ENCODE measurements at regions of chr19 and their contacts with region 1.

Region 1: DNA sequence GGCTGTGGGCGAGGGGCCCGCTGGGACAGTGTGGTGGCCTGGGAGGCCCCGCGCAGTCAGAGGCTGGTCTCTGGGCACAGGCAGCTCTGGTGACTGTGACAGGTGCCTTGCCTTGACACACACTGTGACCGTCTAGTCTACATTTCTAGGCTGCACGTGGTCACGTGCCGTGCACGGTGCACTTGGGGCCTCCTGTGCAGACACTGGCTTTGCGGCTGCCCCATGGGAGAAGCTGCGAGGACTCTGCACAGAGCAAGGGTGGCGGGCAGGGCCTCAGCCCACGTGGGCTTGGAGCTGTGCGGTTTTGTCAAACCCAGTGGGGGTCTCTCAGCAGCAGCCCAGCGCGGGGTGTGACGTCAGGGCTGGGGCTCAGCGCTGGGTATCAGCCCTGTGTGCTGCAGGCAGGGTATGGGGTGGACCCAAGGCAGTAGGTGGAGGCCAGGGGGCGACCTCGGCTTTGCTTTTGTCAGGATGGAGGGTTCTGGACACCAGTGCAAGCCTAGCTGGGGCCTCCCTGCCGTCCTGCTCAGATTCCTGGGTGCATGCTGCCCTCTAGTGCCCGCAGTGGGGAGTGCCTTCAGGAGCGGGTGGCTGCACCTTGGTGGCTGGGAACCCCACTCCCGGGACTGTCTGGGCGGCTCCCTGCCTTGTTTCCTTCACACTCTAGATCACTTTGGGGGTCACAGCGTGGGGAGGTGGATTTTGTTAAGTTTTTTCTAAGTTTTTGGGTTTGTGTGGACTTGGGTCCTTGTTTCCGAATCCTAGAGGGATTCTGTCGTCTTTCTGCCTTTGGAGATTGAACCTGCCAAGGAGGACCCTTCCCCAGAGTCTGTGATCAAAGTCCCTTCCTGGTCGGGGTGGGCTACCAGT is 62.6 kb downstream of the KDM4B start:
- DNase-seq: peak; percentile 61
- H3K4me3 ChIP-seq: no peak overlapping the region
- H3K27ac ChIP-seq: no peak overlapping the region
- H3K4me1 ChIP-seq: no peaks in the 10 kb centered on the region
- H3K27me3 ChIP-seq: no peaks in the 10 kb centered on the region
- CTCF ChIP-seq: peak; percentile 92 to 95
- POLR2A ChIP-seq: no peak

Region 2: GRCh38 chr19:4867534-4868285 is 163.8 kb before region 1 on chr19 and contains the start of gene PLIN3:
- CTCF ChIA-PET with region 1: interaction called, 103 read pairs
- POLR2A ChIA-PET with region 1: no interaction called
- dilution Hi-C with region 1: no loop called
- intact Hi-C with region 1: loop called (anchors 1 kb)
- DNase-seq: peak; percentile 98
- H3K4me3 ChIP-seq: peak within 1 kb of the TSS; percentile 70 to 95 (median 92)
- H3K27ac ChIP-seq: peak within 1 kb of the TSS; percentile 49
- H3K4me1 ChIP-seq: peaks cover 6% of the 10 kb centered on the region
- H3K27me3 ChIP-seq: no peaks in the 10 kb centered on the region
- CTCF ChIP-seq: no peak
- POLR2A ChIP-seq: peak; percentile 43
- total RNA-seq, gene PLIN3: 76.8 and 77.9 TPM in 2 replicates

Region 3: GRCh38 chr19:4968462-4969291 is 62.8 kb before region 1 on chr19 and contains the start of gene KDM4B:
- CTCF ChIA-PET with region 1: interaction called, 11 read pairs
- POLR2A ChIA-PET with region 1: interaction called, 4 read pairs
- dilution Hi-C with region 1: no loop called
- intact Hi-C with region 1: loop called (anchors 2 kb)
- DNase-seq: peak; percentile 100
- H3K4me3 ChIP-seq: peak within 1 kb of the TSS; percentile 45 to 54 (median 48)
- H3K27ac ChIP-seq: no peak within 1 kb of the TSS
- H3K4me1 ChIP-seq: peaks cover 23% of the 10 kb centered on the region
- H3K27me3 ChIP-seq: no peaks in the 10 kb centered on the region
- CTCF ChIP-seq: no peak
- POLR2A ChIP-seq: peak; percentile 85
- total RNA-seq, gene KDM4B: 30.8 and 37.2 TPM in 2 replicates

Measured in endothelial cell of umbilical vein (primary cell).